ENCODE measurements at regions of chr10 and their contacts with region 1.

Region 1: DNA sequence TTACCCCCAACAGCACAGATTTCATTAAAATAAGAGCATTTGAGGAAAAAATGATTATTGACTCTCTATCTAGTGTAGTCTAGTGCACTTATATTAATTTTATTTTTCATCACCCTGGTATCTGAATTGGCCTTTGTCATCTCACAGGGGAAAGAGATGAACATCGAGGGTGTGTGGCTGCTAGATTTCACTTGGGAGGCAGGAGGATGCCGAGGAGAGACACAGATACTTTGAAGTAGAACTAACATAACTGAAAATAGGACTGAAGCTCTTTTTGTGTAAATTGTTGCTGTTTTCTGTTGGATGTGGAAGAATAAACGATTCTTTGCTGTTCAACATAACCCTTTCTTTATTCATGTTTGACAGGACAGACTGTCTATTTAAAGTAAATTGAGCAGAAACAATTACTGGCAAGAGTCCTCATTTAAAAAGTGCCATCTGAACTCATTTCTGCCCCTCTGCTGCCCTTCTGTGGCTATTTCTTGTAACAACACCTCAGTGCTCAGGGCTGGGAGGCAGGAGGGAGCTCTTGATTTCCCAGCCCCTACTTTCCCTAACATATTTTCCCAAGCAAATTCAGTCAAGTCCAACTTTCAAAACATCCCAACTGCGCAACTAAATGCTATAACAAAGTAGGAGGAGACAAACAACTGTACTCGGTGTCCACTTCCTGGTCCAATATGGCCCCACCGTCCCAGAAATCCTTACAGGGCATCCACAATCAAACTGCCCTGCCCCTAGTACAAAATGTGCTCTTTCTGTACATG is 15.6 kb downstream of the LYZL1 start:
- DNase-seq: peak; percentile 70
- ATAC-seq: peak; percentile 98
- H3K4me3 ChIP-seq: no peak overlapping the region
- H3K27ac ChIP-seq: no peak overlapping the region
- H3K4me1 ChIP-seq: no peaks in the 10 kb centered on the region
- H3K27me3 ChIP-seq: no peaks in the 10 kb centered on the region; the same call in 1 of the 2 replicates
- CTCF ChIP-seq: peak; percentile 91
- POLR2A ChIP-seq: no peak
- RAD21 ChIP-seq: peak; percentile 93

Region 2: GRCh38 chr10:28663576-28664313 is 640.7 kb before region 1 on chr10:
- CTCF ChIA-PET with region 1: interaction called, 16 read pairs
- POLR2A ChIA-PET with region 1: no interaction called
- dilution Hi-C with region 1: no loop called
- in situ Hi-C with region 1: loop called (anchors 5 kb)
- intact Hi-C with region 1: loop called (anchors 1 kb)
- DNase-seq: peak; percentile 87
- ATAC-seq: peak; percentile 84
- H3K4me3 ChIP-seq: no peak overlapping the region
- H3K27ac ChIP-seq: no peak overlapping the region
- H3K4me1 ChIP-seq: peaks cover 6% of the 10 kb centered on the region
- H3K27me3 ChIP-seq: peaks cover 25% of the 10 kb centered on the region
- CTCF ChIP-seq: peak; percentile 99
- POLR2A ChIP-seq: peak; percentile 54; the same call in 1 of the 2 replicates
- RAD21 ChIP-seq: peak; percentile 100

Region 3: DNA sequence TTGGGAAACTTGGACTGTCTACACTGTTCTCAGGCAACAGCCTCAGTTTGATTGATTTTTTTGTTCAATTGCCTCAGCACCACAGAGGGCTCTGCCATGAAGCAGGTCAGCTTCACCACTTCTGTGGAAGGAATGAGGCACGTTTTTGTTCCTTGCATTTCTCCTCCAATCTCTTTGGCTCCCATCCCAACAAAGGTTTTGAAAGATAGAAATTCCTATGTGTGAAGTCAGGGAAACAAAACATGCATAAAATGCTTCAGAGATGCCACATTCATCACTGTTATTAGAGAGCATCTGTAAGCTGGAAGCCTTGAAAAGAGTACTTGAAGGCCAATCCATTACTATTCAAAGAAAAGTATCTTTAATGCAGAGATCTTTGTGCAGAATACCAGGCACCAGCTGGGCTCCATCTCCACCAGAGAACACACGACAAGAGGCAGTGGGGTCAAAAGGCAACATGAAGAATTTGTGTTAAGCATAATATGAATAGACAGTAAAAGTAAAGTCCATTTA is 264.7 kb before region 1 on chr10:
- CTCF ChIA-PET with region 1: no interaction called
- POLR2A ChIA-PET with region 1: no interaction called
- dilution Hi-C with region 1: no loop called
- in situ Hi-C with region 1: no loop called
- intact Hi-C with region 1: loop called (anchors 10 kb)
- DNase-seq: peak; percentile 87
- ATAC-seq: peak; percentile 82
- H3K4me3 ChIP-seq: no peak overlapping the region
- H3K27ac ChIP-seq: peak overlapping the region; percentile 67; the same call in 1 of the 2 replicates
- H3K4me1 ChIP-seq: peaks cover 23% of the 10 kb centered on the region
- H3K27me3 ChIP-seq: no peaks in the 10 kb centered on the region
- CTCF ChIP-seq: no peak
- POLR2A ChIP-seq: no peak
- RAD21 ChIP-seq: no peak

Region 4: GRCh38 chr10:29131952-29132820 is 172.3 kb before region 1 on chr10:
- CTCF ChIA-PET with region 1: interaction called, 8 read pairs
- POLR2A ChIA-PET with region 1: interaction called, 10 read pairs
- dilution Hi-C with region 1: no loop called
- in situ Hi-C with region 1: no loop called
- intact Hi-C with region 1: loop called (anchors 2 kb)
- DNase-seq: peak; percentile 19
- ATAC-seq: peak; percentile 49; the same call in 1 of the 2 replicates
- H3K4me3 ChIP-seq: no peak overlapping the region
- H3K27ac ChIP-seq: no peak overlapping the region
- H3K4me1 ChIP-seq: peaks cover 15% of the 10 kb centered on the region
- H3K27me3 ChIP-seq: peaks cover 3% of the 10 kb centered on the region
- CTCF ChIP-seq: no peak
- POLR2A ChIP-seq: no peak
- RAD21 ChIP-seq: no peak

Region 5: GRCh38 chr10:29392376-29393021 is 88.1 kb after region 1 on chr10:
- CTCF ChIA-PET with region 1: no interaction called
- POLR2A ChIA-PET with region 1: no interaction called
- dilution Hi-C with region 1: no loop called
- in situ Hi-C with region 1: no loop called
- intact Hi-C with region 1: no loop called
- DNase-seq: peak; percentile 31
- ATAC-seq: peak; percentile 94
- H3K4me3 ChIP-seq: no peak overlapping the region
- H3K27ac ChIP-seq: no peak overlapping the region
- H3K4me1 ChIP-seq: no peaks in the 10 kb centered on the region
- H3K27me3 ChIP-seq: peaks cover 50% of the 10 kb centered on the region
- CTCF ChIP-seq: peak; percentile 67
- POLR2A ChIP-seq: no peak
- RAD21 ChIP-seq: peak; percentile 60